ENCODE measurements at regions of chr1 and their contacts with region 1.

Region 1: GRCh38 chr1:53182111-53182593 is 14.5 kb upstream of the CPT2 start:
- DNase-seq: peak in 1 of 2 donors; percentile 86
- H3K4me3 ChIP-seq: no peak overlapping the region
- H3K27ac ChIP-seq: peak overlapping the region in 1 of 2 donors; percentile 11
- H3K4me1 ChIP-seq: no peaks in the 10 kb centered on the region
- H3K27me3 ChIP-seq: no peaks in the 10 kb centered on the region
- CTCF ChIP-seq: peak; percentile 70 to 85 (median 83)

Region 2: DNA sequence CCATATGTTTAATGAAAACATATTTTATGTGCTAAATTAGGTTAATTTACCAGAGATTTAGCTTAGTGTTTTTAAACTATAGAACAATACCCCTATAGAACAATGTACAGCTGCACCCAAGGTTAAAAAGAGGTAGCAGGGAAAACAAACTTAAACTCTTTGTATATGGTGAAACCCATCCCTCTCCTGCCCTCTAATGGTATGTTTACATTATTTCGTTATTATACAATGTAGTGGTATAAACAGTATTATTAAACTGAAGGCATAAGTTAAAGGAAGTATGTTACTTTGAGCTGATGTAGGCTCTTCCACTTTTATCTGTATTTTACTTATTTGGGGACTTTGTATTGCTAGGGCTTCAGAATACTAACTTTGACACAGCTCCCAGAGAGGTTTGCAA is 356.3 kb before region 1 on chr1:
- intact Hi-C with region 1: loop called (anchors 10 kb)
- DNase-seq: no peak
- H3K4me3 ChIP-seq: no peak overlapping the region
- H3K27ac ChIP-seq: no peak overlapping the region
- H3K4me1 ChIP-seq: no peaks in the 10 kb centered on the region
- H3K27me3 ChIP-seq: no peaks in the 10 kb centered on the region
- CTCF ChIP-seq: no peak

Region 3: DNA sequence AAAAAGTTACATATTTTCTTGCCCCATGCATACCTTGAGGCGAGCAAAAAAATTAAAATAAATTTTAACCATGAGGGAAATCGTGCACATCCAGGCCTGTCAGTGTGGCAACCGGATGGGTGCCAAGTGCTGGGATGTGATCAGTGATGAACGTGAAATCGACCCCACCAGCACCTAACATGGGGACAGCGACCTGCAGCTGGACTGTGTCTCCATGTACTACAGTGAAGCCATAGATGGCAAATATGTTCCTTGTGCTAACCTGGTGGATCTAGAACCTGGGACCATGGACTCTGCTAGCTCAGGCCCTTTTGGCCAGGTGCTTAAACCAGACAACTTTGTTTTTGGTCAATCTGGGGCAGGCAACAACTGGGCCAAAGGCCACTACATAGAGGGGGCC is 187.5 kb before region 1 on chr1:
- intact Hi-C with region 1: no loop called
- DNase-seq: no peak
- H3K4me3 ChIP-seq: no peak overlapping the region
- H3K27ac ChIP-seq: no peak overlapping the region
- H3K4me1 ChIP-seq: no peaks in the 10 kb centered on the region
- H3K27me3 ChIP-seq: no peaks in the 10 kb centered on the region
- CTCF ChIP-seq: no peak

Region 4: GRCh38 chr1:53014791-53015507 is 167.2 kb before region 1 on chr1:
- intact Hi-C with region 1: loop called (anchors 10 kb)
- DNase-seq: peak; percentile 24 to 86
- H3K4me3 ChIP-seq: peak overlapping the region; percentile 50 to 68
- H3K27ac ChIP-seq: peak overlapping the region in 1 of 2 donors; percentile 3
- H3K4me1 ChIP-seq: peaks cover 0 to 5% of the 10 kb centered on the region in 2 donors
- H3K27me3 ChIP-seq: no peaks in the 10 kb centered on the region
- CTCF ChIP-seq: no peak